Activated CD4-positive, alpha-beta T cell treated with anti-CD3 and anti-CD28 coated beads for 36 hours (primary cell): ENCODE measurements at regions of chr6 and their contacts with region 1.

Region 1: GRCh38 chr6:70166088-70166958 is 136.6 kb downstream of the COL9A1 start:
- DNase-seq: peak; percentile 67
- ATAC-seq: peak; percentile 55
- H3K4me3 Mint-ChIP-seq: no peak overlapping the region
- H3K27ac Mint-ChIP-seq: no peak overlapping the region
- H3K4me1 Mint-ChIP-seq: peaks cover 3% of the 10 kb centered on the region
- H3K27me3 Mint-ChIP-seq: peaks cover 25% of the 10 kb centered on the region

Region 2: GRCh38 chr6:69719602-69720193 is 446.6 kb before region 1 on chr6:
- CTCF ChIA-PET with region 1: no interaction called
- POLR2A ChIA-PET with region 1: no interaction called
- intact Hi-C with region 1: loop called in 1 of 2 experiments (anchors 10 kb)
- DNase-seq: no peak
- ATAC-seq: no peak
- H3K4me3 Mint-ChIP-seq: no peak overlapping the region
- H3K27ac Mint-ChIP-seq: no peak overlapping the region
- H3K4me1 Mint-ChIP-seq: peaks cover 4% of the 10 kb centered on the region
- H3K27me3 Mint-ChIP-seq: no peaks in the 10 kb centered on the region

Region 3: DNA sequence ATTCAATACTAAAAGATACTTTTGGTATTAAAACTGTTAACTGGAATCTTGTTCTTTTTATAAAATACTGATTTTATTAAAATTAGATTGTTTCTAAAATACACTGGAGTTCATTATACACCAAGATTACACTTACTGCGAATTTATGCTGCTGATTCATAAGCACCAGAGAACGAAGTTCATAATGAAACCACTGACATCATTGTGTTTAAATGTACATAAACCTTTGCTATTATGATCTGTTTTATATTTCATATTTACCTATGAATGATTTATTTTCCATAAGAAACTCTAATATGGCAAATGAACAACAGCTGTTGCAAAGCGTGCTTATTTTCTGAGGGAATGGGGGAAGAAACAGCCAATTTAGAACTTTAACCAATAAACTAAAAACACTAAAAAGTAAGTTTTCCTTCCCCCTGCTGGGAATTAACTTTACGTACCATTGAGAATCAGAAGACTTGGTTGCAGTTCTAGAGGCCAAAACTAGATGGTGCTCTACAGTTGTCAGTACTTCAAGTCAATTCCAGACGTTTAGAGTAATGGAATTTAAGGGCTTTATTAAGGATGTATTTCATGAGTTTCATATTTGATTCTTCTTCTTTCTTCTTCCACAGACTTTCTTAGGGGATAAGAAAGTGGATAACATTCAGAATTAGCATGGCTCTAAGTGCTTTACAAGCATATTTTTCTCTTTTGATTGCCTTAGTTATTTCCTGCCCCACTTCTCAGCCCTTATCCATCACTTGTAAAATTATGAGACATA is 330.7 kb before region 1 on chr6:
- CTCF ChIA-PET with region 1: interaction called, 3 read pairs
- POLR2A ChIA-PET with region 1: no interaction called
- intact Hi-C with region 1: loop called in 1 of 2 experiments (anchors 1 kb)
- DNase-seq: no peak
- ATAC-seq: peak; percentile 78
- H3K4me3 Mint-ChIP-seq: no peak overlapping the region
- H3K27ac Mint-ChIP-seq: no peak overlapping the region
- H3K4me1 Mint-ChIP-seq: peaks cover 4% of the 10 kb centered on the region
- H3K27me3 Mint-ChIP-seq: no peaks in the 10 kb centered on the region

Region 4: DNA sequence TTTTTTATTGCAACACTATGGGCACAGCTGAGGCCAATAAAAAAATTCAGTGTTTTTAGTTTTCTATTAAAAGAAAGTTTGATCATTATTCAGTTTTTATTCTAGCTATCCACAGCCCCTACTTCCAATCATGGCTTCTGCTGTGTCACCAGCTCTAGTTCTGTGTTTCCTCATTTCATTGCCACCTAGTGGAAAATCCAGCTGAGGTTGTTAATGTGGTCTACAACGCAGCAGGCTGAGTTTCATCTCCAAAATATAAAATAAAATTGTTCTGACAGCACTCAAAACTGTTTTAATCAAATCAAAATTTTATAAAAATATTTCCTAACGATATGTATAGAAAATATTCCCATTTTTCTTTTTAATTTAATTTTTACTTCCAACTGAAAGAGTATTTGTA is 123.0 kb after region 1 on chr6:
- CTCF ChIA-PET with region 1: no interaction called
- POLR2A ChIA-PET with region 1: no interaction called
- intact Hi-C with region 1: no loop called
- DNase-seq: no peak
- ATAC-seq: no peak
- H3K4me3 Mint-ChIP-seq: no peak overlapping the region
- H3K27ac Mint-ChIP-seq: no peak overlapping the region
- H3K4me1 Mint-ChIP-seq: no peaks in the 10 kb centered on the region
- H3K27me3 Mint-ChIP-seq: peaks cover 16% of the 10 kb centered on the region

Region 5: GRCh38 chr6:70299456-70299855 is 133.1 kb after region 1 on chr6:
- CTCF ChIA-PET with region 1: no interaction called
- POLR2A ChIA-PET with region 1: no interaction called
- intact Hi-C with region 1: no loop called
- DNase-seq: no peak
- ATAC-seq: no peak
- H3K4me3 Mint-ChIP-seq: no peak overlapping the region
- H3K27ac Mint-ChIP-seq: no peak overlapping the region
- H3K4me1 Mint-ChIP-seq: no peaks in the 10 kb centered on the region
- H3K27me3 Mint-ChIP-seq: peaks cover 18% of the 10 kb centered on the region